ENCODE measurements at regions of chr21 and their contacts with region 1.

Region 1: DNA sequence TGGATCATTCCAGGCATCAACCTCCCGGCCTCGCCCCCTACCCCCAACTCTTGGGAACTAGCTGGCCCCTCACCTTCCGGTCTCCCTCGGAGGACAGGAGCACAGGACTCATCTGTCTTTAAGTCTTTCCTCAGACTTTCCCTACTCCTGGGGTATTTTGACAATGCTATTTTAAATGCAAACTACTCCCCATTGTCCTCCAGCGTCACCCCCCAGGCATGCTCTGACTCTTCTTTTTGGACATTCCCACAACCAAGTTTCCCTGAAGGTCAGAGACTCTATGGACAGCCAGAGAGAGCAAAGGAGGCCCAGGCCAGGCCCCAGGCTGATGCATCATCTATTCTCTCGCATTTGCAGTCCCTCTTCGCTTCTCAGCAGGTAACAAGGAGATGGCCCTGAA is 424.3 kb downstream of the PCP4 start:
- DNase-seq: no peak
- H3K4me3 ChIP-seq: no peak overlapping the region
- H3K27ac ChIP-seq: no peak overlapping the region
- H3K4me1 ChIP-seq: no peaks in the 10 kb centered on the region
- H3K27me3 ChIP-seq: no peaks in the 10 kb centered on the region
- CTCF ChIP-seq: no peak
- POLR2A ChIP-seq: no peak

Region 2: GRCh38 chr21:40257342-40257741 is 34.2 kb before region 1 on chr21:
- CTCF ChIA-PET with region 1: no interaction called
- POLR2A ChIA-PET with region 1: no interaction called
- dilution Hi-C with region 1: no loop called
- intact Hi-C with region 1: loop called (anchors 2 kb)
- DNase-seq: no peak
- H3K4me3 ChIP-seq: no peak overlapping the region
- H3K27ac ChIP-seq: no peak overlapping the region
- H3K4me1 ChIP-seq: no peaks in the 10 kb centered on the region
- H3K27me3 ChIP-seq: no peaks in the 10 kb centered on the region
- CTCF ChIP-seq: no peak
- POLR2A ChIP-seq: no peak

Region 3: DNA sequence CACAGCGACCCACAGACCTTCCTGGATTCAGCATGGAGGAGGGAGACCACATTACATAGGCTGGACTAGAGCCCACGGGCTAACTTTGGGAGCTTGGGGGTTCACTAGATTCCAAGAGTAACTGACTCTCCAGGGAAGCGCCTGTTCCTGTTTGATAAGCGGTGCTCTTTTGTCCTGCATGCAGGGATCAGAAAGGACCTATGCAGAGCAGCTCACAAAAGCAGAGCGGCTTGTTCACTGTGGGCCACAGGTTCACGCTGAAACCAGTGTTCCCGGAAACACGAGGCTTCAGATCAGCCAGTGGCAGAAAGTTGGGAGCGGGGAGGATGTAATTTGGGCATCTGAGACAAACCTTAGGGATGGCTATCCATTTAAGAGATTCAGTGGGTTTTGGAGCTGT is 20.4 kb before region 1 on chr21:
- CTCF ChIA-PET with region 1: no interaction called
- POLR2A ChIA-PET with region 1: no interaction called
- dilution Hi-C with region 1: no loop called
- intact Hi-C with region 1: no loop called
- DNase-seq: no peak
- H3K4me3 ChIP-seq: no peak overlapping the region
- H3K27ac ChIP-seq: no peak overlapping the region
- H3K4me1 ChIP-seq: no peaks in the 10 kb centered on the region
- H3K27me3 ChIP-seq: no peaks in the 10 kb centered on the region
- CTCF ChIP-seq: no peak
- POLR2A ChIP-seq: no peak

Measured in endothelial cell of umbilical vein (primary cell).